Right ventricle myocardium inferior (tissue), 1 donor: ENCODE measurements at regions of chr5 and their contacts with region 1.

Region 1: GRCh38 chr5:145981589-145982491 is 45.5 kb downstream of the SH3RF2 start:
- DNase-seq: no peak
- ATAC-seq: no peak

Region 2: GRCh38 chr5:145775893-145776444 is 205.9 kb before region 1 on chr5:
- intact Hi-C with region 1: no loop called
- DNase-seq: no peak
- ATAC-seq: peak; percentile 91

Region 3: GRCh38 chr5:145856285-145856818 is 125.5 kb before region 1 on chr5:
- intact Hi-C with region 1: no loop called
- DNase-seq: no peak
- ATAC-seq: peak; percentile 53

Region 4: DNA sequence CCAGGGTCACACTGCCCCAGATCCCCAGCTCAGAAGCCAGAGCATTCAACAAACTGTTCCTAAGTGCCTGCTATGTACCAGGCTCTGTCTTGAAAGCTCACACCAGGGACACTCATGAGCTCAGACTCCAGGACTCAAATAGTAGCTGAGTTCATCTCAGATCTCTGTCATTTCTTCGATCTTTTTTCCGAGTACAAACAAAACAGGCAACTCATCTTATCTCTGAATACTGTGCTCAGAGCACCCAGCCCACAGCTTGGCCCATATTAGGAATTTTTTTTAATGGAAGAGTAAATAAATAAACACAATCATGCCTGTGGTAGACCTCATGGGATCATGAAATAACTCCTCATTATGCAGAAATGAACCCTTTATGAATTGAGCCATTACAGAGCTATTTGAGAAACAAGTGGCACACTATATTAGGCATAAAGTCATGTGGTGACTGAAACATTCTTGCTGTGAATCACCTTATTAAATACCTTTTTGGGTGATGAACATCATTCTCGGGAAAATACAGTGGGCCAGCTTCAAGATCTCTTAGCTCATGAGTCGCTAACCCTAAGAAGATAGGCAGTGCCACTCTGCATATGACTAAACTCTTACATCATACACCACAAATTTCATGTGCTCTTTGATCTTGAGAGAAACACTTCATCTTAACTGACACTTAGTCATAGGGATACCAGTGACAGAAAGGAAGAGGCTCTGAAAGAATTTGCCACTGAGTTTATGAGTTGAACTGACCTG is 35.6 kb before region 1 on chr5:
- intact Hi-C with region 1: loop called (anchors 5 kb)
- DNase-seq: no peak
- ATAC-seq: peak; percentile 90